Left ventricle myocardium superior (tissue), 1 donor: ENCODE measurements at regions of chr21 and their contacts with region 1.

Region 1: DNA sequence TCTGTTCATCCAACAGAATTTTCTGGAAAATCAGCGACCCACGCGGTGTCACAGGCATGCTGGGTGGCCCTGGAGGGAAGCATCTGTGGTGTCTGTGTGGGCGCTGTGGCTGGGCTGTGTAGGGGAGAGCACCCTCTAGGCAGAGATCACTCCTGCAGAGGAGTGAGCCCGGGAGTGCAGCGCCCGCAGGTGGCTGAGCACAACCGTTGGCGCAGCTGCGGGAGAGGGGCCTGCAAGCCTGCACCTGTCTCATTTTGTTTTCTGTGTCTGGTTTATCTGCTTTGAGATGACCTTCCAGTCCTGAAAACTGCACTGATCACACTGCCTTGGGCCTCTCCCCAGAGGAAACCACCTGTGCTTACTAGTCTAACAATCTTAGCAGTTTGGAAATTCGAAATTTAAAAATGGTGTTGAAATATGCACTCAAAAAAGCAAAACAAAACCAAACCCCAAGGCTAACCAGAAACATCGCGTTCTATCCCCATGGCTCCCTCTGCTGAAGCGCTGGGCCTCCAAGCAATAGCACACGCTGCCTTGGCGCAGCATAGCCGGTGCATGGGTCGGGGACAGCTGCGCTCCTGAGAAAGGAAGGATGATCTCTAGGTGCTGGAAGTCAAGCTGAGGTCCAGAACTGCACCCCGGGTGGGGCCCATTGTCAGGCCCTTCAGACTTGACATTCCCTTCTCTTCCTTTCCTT is 4.8 kb downstream of the FAM3B start:
- DNase-seq: no peak
- ATAC-seq: no peak

Region 2: DNA sequence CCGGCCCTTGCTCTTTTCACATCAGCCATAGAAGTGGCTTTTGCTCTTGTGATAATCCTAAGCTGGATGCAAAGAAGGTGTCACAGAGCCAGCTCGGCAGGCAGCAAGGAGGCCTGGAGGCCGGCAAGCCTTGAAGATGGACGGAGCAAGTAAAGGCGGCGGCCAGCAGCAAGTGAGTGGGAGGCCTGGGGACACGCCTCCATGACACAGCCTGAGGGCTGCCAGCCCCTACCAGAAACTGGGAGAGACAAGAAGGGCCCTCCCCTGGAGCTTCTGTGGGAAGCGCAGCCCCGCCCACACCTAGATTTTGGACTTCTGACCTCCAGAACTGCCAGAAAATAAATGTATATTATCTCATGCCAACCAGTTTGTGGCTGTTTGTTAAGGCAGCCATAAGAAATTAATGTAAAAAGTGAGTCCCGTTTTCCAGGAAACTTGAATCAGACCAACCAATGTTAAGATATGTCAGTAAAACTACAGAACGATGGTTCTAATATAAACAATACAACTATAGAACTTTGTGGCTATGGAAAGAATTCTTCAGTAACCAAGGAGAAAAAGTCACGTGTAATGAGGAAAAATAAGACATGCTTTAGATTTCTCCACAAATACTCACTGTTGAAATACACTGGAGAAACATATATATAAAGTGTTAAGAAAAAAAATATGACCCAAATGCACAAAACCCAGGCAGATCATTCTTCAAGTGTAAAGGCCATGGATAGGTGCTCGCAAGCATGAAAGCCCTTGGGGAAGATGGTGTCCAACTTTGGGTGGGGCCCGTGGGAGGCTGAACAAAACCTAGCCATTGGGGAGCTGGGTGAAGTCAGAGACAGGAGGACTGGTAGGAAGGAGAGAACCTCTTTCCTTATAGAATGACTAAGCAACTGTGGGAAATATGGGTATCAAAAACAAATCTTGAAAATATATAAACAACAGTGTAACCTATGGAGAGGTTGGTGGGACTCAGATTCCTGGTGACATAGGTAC is 103.4 kb before region 1 on chr21:
- intact Hi-C with region 1: no loop called
- DNase-seq: peak; percentile 75
- ATAC-seq: peak; percentile 90

Region 3: DNA sequence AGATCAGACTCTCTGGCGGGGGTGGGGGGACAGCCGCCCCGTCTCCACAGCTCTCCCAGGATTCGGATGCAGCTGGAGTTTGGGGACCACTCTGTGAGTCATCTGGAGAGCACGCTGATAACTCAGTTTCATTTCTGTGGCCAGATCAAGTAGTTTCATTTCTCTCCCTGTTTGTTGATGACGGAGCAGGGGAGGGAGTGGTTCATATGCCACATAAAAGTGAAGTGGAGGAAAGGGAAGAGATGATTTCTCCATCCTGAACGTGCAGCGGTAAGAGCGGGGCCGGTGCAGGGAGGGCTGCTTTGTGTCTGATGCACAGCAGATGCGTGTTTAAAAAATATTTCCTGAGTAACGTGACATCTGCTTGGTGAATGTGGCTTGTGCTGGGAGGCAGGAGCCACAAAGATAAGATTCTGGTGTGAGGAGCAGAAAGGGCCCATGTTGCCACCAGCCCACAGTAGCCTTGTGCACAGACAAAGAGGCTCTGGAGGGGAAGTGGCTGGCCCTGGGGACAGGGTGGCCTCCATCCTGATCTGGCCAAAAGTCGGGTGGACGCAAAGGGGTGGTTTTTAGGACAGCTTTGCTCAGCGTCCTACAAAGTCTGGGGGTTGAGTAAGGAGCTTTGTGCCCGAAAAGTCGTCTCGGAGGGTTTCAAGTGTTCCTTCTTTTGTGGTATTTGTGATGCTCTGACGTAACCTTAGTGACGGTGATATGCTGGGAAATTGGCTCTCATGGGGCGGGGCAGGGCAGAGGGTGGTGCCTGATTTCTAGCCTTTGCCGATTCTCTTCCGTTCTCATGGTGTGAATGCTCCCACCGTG is 40.6 kb after region 1 on chr21 and contains the start of gene MX2:
- intact Hi-C with region 1: no loop called
- DNase-seq: peak; percentile 75
- ATAC-seq: peak; percentile 89
- total RNA-seq, gene MX2: 7.1 TPM

Region 4: DNA sequence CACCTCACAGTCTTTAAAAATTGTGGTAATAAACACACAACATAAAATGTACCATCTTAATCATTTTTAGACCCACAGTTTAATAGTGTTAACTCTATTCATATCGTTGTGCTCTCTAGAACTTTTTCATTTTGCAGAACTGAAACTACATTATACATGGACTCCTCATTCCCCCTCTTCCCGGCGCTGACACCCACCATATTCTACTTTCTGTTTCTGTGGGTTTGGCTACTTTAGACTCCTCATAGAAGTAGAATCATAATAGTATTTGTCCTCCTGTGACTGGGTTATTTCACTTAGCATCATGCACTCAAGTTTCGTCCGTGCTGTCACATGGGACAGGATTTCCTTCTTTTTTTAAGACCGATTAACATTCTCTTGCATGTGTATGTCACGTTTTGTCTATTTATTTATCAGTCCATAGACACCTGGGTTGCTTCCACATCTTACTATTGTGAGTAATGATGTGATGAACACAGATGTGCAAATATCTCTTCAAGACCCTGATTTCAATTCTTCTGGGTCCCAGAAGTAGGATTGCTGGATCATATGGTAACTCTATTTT is 249.5 kb after region 1 on chr21:
- intact Hi-C with region 1: loop called (anchors 5 kb)
- DNase-seq: no peak
- ATAC-seq: no peak